ENCODE measurements at regions of chr20 and their contacts with region 1.

Region 1: GRCh38 chr20:10469599-10469998 is 34.5 kb downstream of the SLX4IP start:
- DNase-seq: peak; percentile 74
- H3K4me3 Mint-ChIP-seq: no peak overlapping the region
- H3K27ac Mint-ChIP-seq: no peak overlapping the region
- H3K4me1 Mint-ChIP-seq: peaks cover 11% of the 10 kb centered on the region
- H3K27me3 Mint-ChIP-seq: no peaks in the 10 kb centered on the region

Region 2: DNA sequence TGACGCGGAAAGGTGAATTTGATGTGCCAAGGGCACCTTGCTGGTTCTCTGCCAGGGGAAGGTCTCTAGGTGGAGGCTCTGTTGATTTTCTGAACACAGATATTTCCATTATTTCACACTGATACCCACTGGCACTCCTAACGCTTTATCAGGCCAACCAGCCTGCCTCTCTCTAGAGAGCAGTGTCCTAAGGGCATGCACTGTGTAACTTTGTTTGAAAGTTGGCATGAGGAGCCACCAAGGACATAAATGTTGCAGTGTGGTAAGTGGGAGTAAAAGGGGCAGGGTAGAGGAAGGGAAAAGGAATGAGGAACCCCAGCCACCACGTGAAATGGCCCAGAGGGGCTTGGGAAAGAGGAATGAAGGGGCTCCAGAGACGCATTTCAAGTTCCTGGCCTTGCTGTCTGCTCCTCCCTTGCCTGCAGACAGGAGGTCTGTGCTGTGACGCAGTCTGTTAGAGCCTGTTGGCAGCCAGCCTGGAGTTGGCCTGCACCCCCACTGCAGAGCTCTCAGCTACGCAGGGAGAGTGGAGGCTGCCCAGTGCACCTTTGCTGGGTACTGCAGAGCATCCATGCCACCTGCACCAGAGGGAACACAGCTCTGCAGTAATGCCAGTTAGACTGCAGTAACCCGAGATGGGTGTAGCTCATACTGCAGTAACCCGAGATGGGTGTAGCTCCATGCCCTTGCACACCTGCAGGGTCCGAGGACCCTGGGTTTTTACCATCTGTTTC is 337.8 kb before region 1 on chr20:
- intact Hi-C with region 1: no loop called
- DNase-seq: no peak
- H3K4me3 Mint-ChIP-seq: no peak overlapping the region
- H3K27ac Mint-ChIP-seq: no peak overlapping the region
- H3K4me1 Mint-ChIP-seq: no peaks in the 10 kb centered on the region
- H3K27me3 Mint-ChIP-seq: no peaks in the 10 kb centered on the region

Region 3: DNA sequence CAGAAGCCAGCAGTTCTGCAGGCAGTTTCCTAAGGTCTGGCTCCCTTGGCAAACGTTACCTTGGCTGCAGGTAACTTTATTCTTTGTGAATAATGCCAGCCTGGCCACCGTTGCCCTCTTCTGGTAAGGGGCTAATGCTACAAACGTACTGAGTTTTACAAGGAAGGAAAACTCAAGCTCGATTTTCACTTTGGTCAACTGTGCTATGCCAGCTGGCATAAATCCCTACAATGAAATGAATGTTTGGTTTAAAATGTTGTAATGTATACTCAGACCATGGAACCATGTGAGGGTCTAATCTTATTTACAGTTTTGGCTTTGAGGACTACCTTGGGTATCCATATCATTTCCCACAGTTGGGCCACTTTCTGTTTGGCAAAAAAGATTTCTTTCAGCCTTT is 66.9 kb after region 1 on chr20:
- intact Hi-C with region 1: loop called (anchors 2 kb)
- DNase-seq: peak; percentile 78
- H3K4me3 Mint-ChIP-seq: no peak overlapping the region
- H3K27ac Mint-ChIP-seq: no peak overlapping the region
- H3K4me1 Mint-ChIP-seq: peaks cover 11% of the 10 kb centered on the region
- H3K27me3 Mint-ChIP-seq: no peaks in the 10 kb centered on the region